Tibial artery (tissue), 4 donors: ENCODE measurements at regions of chr17 and their contacts with region 1.

Region 1: DNA sequence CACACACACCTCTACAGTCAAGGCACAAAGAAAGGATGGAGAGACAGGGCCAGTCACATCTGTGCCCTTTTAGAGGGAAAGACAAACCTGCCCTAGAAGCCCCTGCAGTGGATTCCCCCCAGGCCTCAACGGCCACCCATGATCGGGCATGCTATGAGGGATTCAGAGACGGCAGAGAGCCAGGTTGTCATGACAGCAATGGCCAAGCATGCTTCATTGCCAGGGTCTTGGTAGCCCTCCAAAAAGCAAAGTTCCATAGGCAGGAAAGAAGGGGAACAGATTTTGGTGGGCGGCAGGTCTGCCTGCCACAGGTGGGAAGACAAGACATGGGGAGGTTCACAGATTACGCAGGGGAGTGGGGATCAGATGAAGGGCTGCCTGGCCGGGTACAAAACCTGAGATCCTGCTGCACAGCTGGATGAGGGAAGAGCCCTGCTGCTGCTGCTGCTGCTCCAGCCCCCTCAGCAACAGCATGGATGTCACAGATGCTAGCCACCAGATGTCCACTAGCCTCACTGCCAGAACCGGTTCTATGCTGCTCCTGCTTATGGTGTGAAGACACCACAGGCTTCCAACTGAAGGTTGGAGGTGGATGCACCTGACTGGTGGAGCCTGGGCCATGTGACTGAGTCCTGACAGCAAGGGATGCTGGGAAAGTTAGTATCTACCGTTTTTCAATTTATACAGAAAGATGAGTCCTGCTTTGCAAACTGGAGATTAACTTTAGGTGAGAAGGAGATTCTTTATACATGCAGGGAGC is 17.8 kb downstream of the ACTG1 start:
- DNase-seq: no peak
- H3K4me3 ChIP-seq: no peak overlapping the region
- H3K27ac ChIP-seq: no peak overlapping the region
- H3K4me1 ChIP-seq: peaks cover 0 to 18% (median 8%) of the 10 kb centered on the region in 4 donors
- H3K27me3 ChIP-seq: peaks cover 0 to 8% of the 10 kb centered on the region in 2 donors
- CTCF ChIP-seq: no peak

Region 2: GRCh38 chr17:81607431-81607830 is 112.6 kb after region 1 on chr17:
- intact Hi-C with region 1: loop called (anchors 5 kb)
- DNase-seq: no peak
- H3K4me3 ChIP-seq: no peak overlapping the region
- H3K27ac ChIP-seq: no peak overlapping the region
- H3K4me1 ChIP-seq: no peaks in the 10 kb centered on the region
- H3K27me3 ChIP-seq: no peaks in the 10 kb centered on the region
- CTCF ChIP-seq: no peak